ENCODE measurements at regions of chr2 and their contacts with region 1.

Region 1: GRCh38 chr2:51028829-51029228 is 3.1 kb downstream of the NRXN1 start:
- DNase-seq: no peak
- H3K4me3 ChIP-seq: no peak overlapping the region
- H3K27ac ChIP-seq: no peak overlapping the region
- H3K4me1 ChIP-seq: peaks cover 0 to 3% of the 10 kb centered on the region in 2 experiments; a peak in 2 of 4 replicates
- H3K27me3 ChIP-seq: no peaks in the 10 kb centered on the region
- CTCF ChIP-seq: no peak
- EP300 ChIP-seq: no peak
- RAD21 ChIP-seq: no peak

Region 2: DNA sequence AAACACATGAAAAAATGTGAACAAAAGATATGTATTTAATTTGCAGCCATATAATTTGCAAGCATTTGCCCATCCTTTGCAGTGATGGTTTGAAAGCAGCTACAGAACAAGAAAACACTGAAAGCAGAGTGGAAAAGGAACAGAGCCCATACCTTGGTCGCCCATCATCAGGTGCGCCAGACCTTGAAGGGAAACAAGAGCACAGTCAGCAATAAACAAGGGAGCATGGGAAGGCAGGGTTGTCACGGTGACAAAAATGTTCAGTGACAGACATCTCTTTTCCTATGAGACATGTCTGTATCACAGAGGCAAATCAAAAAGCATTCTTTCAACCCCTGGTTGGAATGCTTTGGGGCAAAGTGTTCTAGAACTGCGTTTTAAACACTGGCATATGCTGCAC is 106.3 kb before region 1 on chr2:
- CTCF ChIA-PET with region 1: no interaction called
- POLR2A ChIA-PET with region 1: no interaction called
- DNase-seq: no peak
- H3K4me3 ChIP-seq: no peak overlapping the region
- H3K27ac ChIP-seq: no peak overlapping the region
- H3K4me1 ChIP-seq: no peaks in the 10 kb centered on the region; a peak in 2 of 4 replicates
- H3K27me3 ChIP-seq: no peaks in the 10 kb centered on the region
- CTCF ChIP-seq: no peak
- EP300 ChIP-seq: no peak
- RAD21 ChIP-seq: no peak

Region 3: GRCh38 chr2:51013079-51013932 is 15.5 kb before region 1 on chr2:
- CTCF ChIA-PET with region 1: interaction called, 12 read pairs
- POLR2A ChIA-PET with region 1: interaction called, 3 read pairs
- DNase-seq: no peak
- H3K4me3 ChIP-seq: no peak overlapping the region
- H3K27ac ChIP-seq: peak overlapping the region in 1 of 2 experiments; percentile 88; a peak in 2 of 4 replicates
- H3K4me1 ChIP-seq: peaks cover 0 to 9% of the 10 kb centered on the region in 2 experiments; a peak in 2 of 4 replicates
- H3K27me3 ChIP-seq: no peaks in the 10 kb centered on the region
- CTCF ChIP-seq: no peak
- EP300 ChIP-seq: no peak
- RAD21 ChIP-seq: no peak

Measured in SK-N-SH (cell line).